ENCODE measurements at regions of chr14 and their contacts with region 1.

Region 1: GRCh38 chr14:85546390-85546789 is 16.4 kb downstream of the FLRT2 start:
- DNase-seq: no peak
- ATAC-seq: no peak
- H3K4me3 ChIP-seq: no peak overlapping the region
- H3K27ac ChIP-seq: no peak overlapping the region
- H3K4me1 ChIP-seq: no peaks in the 10 kb centered on the region
- H3K27me3 ChIP-seq: no peaks in the 10 kb centered on the region
- CTCF ChIP-seq: no peak
- POLR2A ChIP-seq: no peak

Region 2: GRCh38 chr14:85366226-85366625 is 180.2 kb before region 1 on chr14:
- intact Hi-C with region 1: no loop called
- DNase-seq: no peak
- ATAC-seq: no peak
- H3K4me3 ChIP-seq: no peak overlapping the region
- H3K27ac ChIP-seq: no peak overlapping the region
- H3K4me1 ChIP-seq: no peaks in the 10 kb centered on the region
- H3K27me3 ChIP-seq: no peaks in the 10 kb centered on the region
- CTCF ChIP-seq: no peak
- POLR2A ChIP-seq: no peak

Region 3: GRCh38 chr14:85512451-85512850 is 33.9 kb before region 1 on chr14:
- intact Hi-C with region 1: loop called in 1 of 10 experiments (anchors 2 kb)
- DNase-seq: no peak
- ATAC-seq: no peak
- H3K4me3 ChIP-seq: no peak overlapping the region
- H3K27ac ChIP-seq: no peak overlapping the region
- H3K4me1 ChIP-seq: peaks cover 0 to 8% (median 0%) of the 10 kb centered on the region in 12 donors
- H3K27me3 ChIP-seq: no peaks in the 10 kb centered on the region
- CTCF ChIP-seq: no peak
- POLR2A ChIP-seq: no peak

Measured in heart left ventricle (tissue), 16 donors.